Activated naive CD8-positive, alpha-beta T cell treated with anti-CD3 and anti-CD28 coated beads, Interleukin-2, amount 10 ng/mL, durations not matched to agents 7 days and 5 days (primary cell): ENCODE measurements at regions of chr2 and their contacts with region 1.

Region 1: GRCh38 chr2:218892693-218893348 is 12.2 kb downstream of the WNT10A start:
- DNase-seq: peak; percentile 87
- ATAC-seq: peak; percentile 69
- H3K4me3 Mint-ChIP-seq: peak overlapping the region; percentile 65
- H3K27ac Mint-ChIP-seq: peak overlapping the region; percentile 70
- H3K4me1 Mint-ChIP-seq: peaks cover 33% of the 10 kb centered on the region
- H3K27me3 Mint-ChIP-seq: peaks cover 42% of the 10 kb centered on the region

Region 2: GRCh38 chr2:218876562-218877219 is 16.1 kb before region 1 on chr2:
- POLR2A ChIA-PET with region 1: interaction called, 53 read pairs
- DNase-seq: peak; percentile 63
- ATAC-seq: peak; percentile 15
- H3K4me3 Mint-ChIP-seq: no peak overlapping the region
- H3K27ac Mint-ChIP-seq: no peak overlapping the region
- H3K4me1 Mint-ChIP-seq: peaks cover 22% of the 10 kb centered on the region
- H3K27me3 Mint-ChIP-seq: peaks cover 61% of the 10 kb centered on the region